ENCODE measurements at regions of chr19 and their contacts with region 1.

Region 1: DNA sequence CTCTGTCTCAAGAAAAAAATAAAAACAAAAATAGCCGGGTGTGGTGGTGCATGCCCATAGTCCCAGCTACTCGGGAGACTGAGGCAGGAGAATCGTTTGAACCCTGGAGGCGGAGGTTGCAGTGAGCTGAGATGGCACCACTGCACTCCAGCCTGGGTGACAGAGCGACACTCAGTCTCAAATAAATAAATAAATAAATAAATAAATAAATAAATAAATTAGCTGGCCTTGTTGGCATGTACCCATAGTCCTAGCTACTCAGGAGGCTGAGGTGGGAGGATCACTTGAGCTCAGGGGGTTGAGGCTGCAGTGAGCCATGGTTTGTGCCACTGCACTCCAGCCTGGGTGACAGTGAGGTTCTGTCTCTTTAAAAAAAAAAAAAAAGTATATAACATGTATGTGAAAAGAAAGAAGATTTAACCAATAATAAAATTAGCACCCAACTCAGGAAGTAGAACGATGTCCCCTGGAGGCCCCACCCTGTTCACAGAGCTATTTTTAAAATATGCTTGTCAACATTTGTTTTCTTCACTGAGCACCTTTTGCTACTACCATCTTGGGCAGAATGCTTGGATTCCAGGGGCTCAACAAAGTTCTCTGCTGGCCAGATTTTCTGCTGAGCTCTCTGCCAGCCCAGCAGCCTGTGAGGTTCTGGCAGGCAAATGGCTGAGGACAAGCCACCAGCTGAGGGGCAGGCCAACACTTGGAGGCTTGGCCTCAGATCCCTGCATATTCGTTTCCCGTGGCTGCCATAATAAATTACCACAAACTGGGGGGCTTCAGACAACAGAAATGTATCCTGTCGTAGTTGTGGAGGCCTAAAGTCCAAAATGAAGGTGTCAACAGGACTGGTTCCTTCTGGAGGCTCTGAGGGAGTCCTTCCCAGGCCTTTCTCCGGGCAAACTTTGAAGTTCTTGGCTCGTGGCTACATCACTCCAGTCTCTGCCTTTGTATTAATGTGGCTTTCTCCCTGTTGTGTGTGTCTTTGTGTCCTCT is 5.2 kb downstream of the SLC25A42 start:
- DNase-seq: peak in 1 of 5 donors; percentile 19
- H3K4me3 ChIP-seq: no peak overlapping the region
- H3K4me3 Mint-ChIP-seq: peak overlapping the region; percentile 51 to 70 (median 65)
- H3K27ac ChIP-seq: peak overlapping the region; percentile 28
- H3K27ac Mint-ChIP-seq: peak overlapping the region; percentile 22 to 90 (median 73)
- H3K4me1 ChIP-seq: peaks cover 26% of the 10 kb centered on the region
- H3K4me1 Mint-ChIP-seq: peaks cover 43 to 70% (median 55%) of the 10 kb centered on the region in 3 donors
- H3K27me3 ChIP-seq: no peaks in the 10 kb centered on the region
- H3K27me3 Mint-ChIP-seq: no peaks in the 10 kb centered on the region

Region 2: DNA sequence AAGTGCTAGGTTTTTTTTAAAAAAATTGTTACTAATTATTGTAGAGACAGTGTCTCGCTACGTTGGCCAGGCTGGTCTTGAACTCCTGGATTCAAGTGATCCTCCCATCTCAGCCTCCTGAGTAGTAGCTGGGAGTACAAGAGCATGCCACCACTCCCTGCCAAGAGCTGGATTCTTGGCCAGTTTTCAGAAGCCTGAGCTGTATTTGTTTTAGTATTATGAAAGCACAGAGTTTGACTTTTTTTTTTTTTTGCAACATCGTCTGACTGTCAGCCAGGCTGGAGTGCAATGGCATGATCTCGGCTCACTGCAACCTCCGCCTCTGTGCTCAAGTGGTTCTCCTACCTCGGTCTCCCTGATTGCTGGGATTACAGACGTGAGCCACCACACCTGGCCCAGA is 28.5 kb before region 1 on chr19:
- CTCF ChIA-PET with region 1: no interaction called
- POLR2A ChIA-PET with region 1: no interaction called
- DNase-seq: no peak
- H3K4me3 ChIP-seq: no peak overlapping the region
- H3K4me3 Mint-ChIP-seq: peak overlapping the region in 1 of 7 donors; percentile 52
- H3K27ac ChIP-seq: no peak overlapping the region
- H3K27ac Mint-ChIP-seq: peak overlapping the region; percentile 17 to 92 (median 74)
- H3K4me1 ChIP-seq: peaks cover 17% of the 10 kb centered on the region
- H3K4me1 Mint-ChIP-seq: peaks cover 11 to 28% (median 23%) of the 10 kb centered on the region in 3 donors
- H3K27me3 ChIP-seq: no peaks in the 10 kb centered on the region
- H3K27me3 Mint-ChIP-seq: no peaks in the 10 kb centered on the region

Region 3: DNA sequence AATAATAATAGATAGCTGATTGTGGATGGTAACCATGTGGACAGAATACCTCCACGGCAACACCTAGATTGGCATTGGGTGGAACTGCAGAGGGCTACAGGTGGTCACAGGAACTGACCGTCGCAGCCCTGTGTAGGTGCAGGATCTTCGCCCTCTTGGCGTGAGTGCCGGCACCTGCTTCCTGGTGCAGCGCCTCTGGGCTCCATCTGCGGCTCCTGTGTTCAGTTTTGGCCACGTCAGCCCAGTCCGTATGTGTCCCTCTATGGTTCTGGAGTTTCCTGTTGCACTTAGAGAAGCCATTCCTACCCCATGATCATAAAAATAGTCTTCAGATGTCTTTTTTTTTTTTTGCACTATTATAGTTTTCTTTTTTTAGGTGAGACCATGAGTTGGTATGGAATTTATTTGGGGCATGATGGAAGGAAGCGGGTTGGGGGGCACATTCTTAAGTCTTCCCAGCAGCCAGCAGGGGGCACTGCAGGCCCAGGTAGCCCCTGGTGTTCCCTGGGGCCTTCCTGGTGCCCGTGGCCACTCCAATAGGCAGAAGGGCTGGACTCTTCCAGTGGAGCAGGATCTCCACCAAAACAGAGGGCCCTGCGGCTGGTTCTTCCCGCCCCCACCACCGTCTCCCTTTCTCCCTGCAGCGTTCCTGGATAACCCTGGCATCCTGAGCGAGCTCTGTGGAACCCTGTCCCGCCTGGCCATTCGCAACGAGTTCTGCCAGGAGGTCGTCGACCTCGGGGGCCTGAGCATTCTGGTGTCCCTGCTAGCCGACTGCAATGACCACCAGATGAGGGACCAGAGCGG is 15.2 kb before region 1 on chr19:
- CTCF ChIA-PET with region 1: interaction called, 19 read pairs
- POLR2A ChIA-PET with region 1: no interaction called
- DNase-seq: peak; percentile 53 to 76 (median 64)
- H3K4me3 ChIP-seq: no peak overlapping the region
- H3K4me3 Mint-ChIP-seq: no peak overlapping the region
- H3K27ac ChIP-seq: no peak overlapping the region
- H3K27ac Mint-ChIP-seq: no peak overlapping the region
- H3K4me1 ChIP-seq: no peaks in the 10 kb centered on the region
- H3K4me1 Mint-ChIP-seq: no peaks in the 10 kb centered on the region
- H3K27me3 ChIP-seq: no peaks in the 10 kb centered on the region
- H3K27me3 Mint-ChIP-seq: no peaks in the 10 kb centered on the region

Region 4: GRCh38 chr19:19155495-19156219 is 86.7 kb after region 1 on chr19:
- CTCF ChIA-PET with region 1: no interaction called
- POLR2A ChIA-PET with region 1: no interaction called
- DNase-seq: no peak
- H3K4me3 ChIP-seq: no peak overlapping the region
- H3K4me3 Mint-ChIP-seq: no peak overlapping the region
- H3K27ac ChIP-seq: no peak overlapping the region
- H3K27ac Mint-ChIP-seq: peak overlapping the region in 1 of 8 donors; percentile 29
- H3K4me1 ChIP-seq: no peaks in the 10 kb centered on the region
- H3K4me1 Mint-ChIP-seq: no peaks in the 10 kb centered on the region
- H3K27me3 ChIP-seq: no peaks in the 10 kb centered on the region
- H3K27me3 Mint-ChIP-seq: no peaks in the 10 kb centered on the region